ENCODE measurements at regions of chr20 and their contacts with region 1.

Region 1: DNA sequence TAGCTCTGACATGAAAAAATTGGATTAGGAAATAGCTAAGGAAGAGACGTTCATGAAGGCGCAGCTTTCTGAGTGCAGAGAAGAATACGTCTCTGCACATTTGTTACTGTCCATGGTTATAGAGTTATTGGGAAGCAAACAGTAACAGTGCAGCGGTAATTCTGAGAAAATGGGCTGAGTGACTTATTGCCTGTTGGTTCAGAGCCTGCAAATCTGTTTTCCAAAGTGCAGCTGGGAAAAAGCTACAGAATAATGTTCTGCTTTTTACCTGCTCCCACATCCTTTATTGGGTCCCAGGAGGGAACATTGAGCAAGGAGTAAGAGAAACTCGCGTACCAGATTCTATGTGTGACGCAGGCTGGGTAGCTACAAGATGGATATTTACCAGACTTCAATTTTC is 160.2 kb downstream of the BTBD3 start:
- DNase-seq: no peak
- H3K4me3 ChIP-seq: no peak overlapping the region
- H3K27ac ChIP-seq: no peak overlapping the region
- H3K4me1 ChIP-seq: no peaks in the 10 kb centered on the region
- H3K27me3 ChIP-seq: no peaks in the 10 kb centered on the region
- CTCF ChIP-seq: no peak
- EP300 ChIP-seq: no peak
- POLR2A ChIP-seq: no peak

Region 2: GRCh38 chr20:12095180-12095920 is 17.5 kb after region 1 on chr20:
- intact Hi-C with region 1: loop called in 1 of 4 experiments (anchors 2 kb)
- DNase-seq: no peak
- H3K4me3 ChIP-seq: no peak overlapping the region
- H3K27ac ChIP-seq: no peak overlapping the region
- H3K4me1 ChIP-seq: no peaks in the 10 kb centered on the region
- H3K27me3 ChIP-seq: no peaks in the 10 kb centered on the region
- CTCF ChIP-seq: no peak
- EP300 ChIP-seq: no peak
- POLR2A ChIP-seq: no peak